ENCODE measurements at regions of chr1 and their contacts with region 1.

Region 1: GRCh38 chr1:88180449-88181108 is 503.5 kb upstream of the PKN2 start:
- DNase-seq: peak; percentile 79
- ATAC-seq: peak; percentile 92
- H3K4me3 Mint-ChIP-seq: no peak overlapping the region
- H3K27ac Mint-ChIP-seq: no peak overlapping the region
- H3K4me1 Mint-ChIP-seq: no peaks in the 10 kb centered on the region
- H3K27me3 Mint-ChIP-seq: peaks cover 6% of the 10 kb centered on the region

Region 2: GRCh38 chr1:87575528-87575927 is 605.1 kb before region 1 on chr1:
- CTCF ChIA-PET with region 1: no interaction called
- POLR2A ChIA-PET with region 1: no interaction called
- intact Hi-C with region 1: no loop called
- DNase-seq: no peak
- ATAC-seq: no peak
- H3K4me3 Mint-ChIP-seq: no peak overlapping the region
- H3K27ac Mint-ChIP-seq: no peak overlapping the region
- H3K4me1 Mint-ChIP-seq: no peaks in the 10 kb centered on the region
- H3K27me3 Mint-ChIP-seq: peaks cover 2% of the 10 kb centered on the region

Region 3: GRCh38 chr1:88302843-88303486 is 122.4 kb after region 1 on chr1:
- CTCF ChIA-PET with region 1: interaction called, 9 read pairs
- POLR2A ChIA-PET with region 1: no interaction called
- intact Hi-C with region 1: loop called in 1 of 2 experiments (anchors 10 kb)
- DNase-seq: no peak
- ATAC-seq: no peak
- H3K4me3 Mint-ChIP-seq: no peak overlapping the region
- H3K27ac Mint-ChIP-seq: no peak overlapping the region
- H3K4me1 Mint-ChIP-seq: no peaks in the 10 kb centered on the region
- H3K27me3 Mint-ChIP-seq: no peaks in the 10 kb centered on the region

Region 4: GRCh38 chr1:88401313-88401712 is 220.7 kb after region 1 on chr1:
- CTCF ChIA-PET with region 1: interaction called, 3 read pairs
- POLR2A ChIA-PET with region 1: no interaction called
- intact Hi-C with region 1: loop called in 1 of 2 experiments (anchors 10 kb)
- DNase-seq: no peak
- ATAC-seq: peak; percentile 58
- H3K4me3 Mint-ChIP-seq: no peak overlapping the region
- H3K27ac Mint-ChIP-seq: no peak overlapping the region
- H3K4me1 Mint-ChIP-seq: no peaks in the 10 kb centered on the region
- H3K27me3 Mint-ChIP-seq: no peaks in the 10 kb centered on the region

Region 5: GRCh38 chr1:88581703-88582102 is 401.1 kb after region 1 on chr1:
- CTCF ChIA-PET with region 1: interaction called, 3 read pairs
- POLR2A ChIA-PET with region 1: no interaction called
- intact Hi-C with region 1: loop called in 1 of 2 experiments (anchors 1 kb)
- DNase-seq: no peak
- ATAC-seq: no peak
- H3K4me3 Mint-ChIP-seq: no peak overlapping the region
- H3K27ac Mint-ChIP-seq: no peak overlapping the region
- H3K4me1 Mint-ChIP-seq: no peaks in the 10 kb centered on the region
- H3K27me3 Mint-ChIP-seq: peaks cover 18% of the 10 kb centered on the region

Region 6: GRCh38 chr1:88595355-88596002 is 414.9 kb after region 1 on chr1:
- CTCF ChIA-PET with region 1: interaction called, 7 read pairs
- POLR2A ChIA-PET with region 1: no interaction called
- intact Hi-C with region 1: loop called in 1 of 2 experiments (anchors 1 kb)
- DNase-seq: no peak
- ATAC-seq: peak; percentile 63
- H3K4me3 Mint-ChIP-seq: no peak overlapping the region
- H3K27ac Mint-ChIP-seq: no peak overlapping the region
- H3K4me1 Mint-ChIP-seq: peaks cover 4% of the 10 kb centered on the region
- H3K27me3 Mint-ChIP-seq: peaks cover 3% of the 10 kb centered on the region

Measured in activated CD4-positive, alpha-beta T cell treated with anti-CD3 and anti-CD28 coated beads for 36 hours (primary cell).